ENCODE measurements at regions of chr6 and their contacts with region 1.

Region 1: DNA sequence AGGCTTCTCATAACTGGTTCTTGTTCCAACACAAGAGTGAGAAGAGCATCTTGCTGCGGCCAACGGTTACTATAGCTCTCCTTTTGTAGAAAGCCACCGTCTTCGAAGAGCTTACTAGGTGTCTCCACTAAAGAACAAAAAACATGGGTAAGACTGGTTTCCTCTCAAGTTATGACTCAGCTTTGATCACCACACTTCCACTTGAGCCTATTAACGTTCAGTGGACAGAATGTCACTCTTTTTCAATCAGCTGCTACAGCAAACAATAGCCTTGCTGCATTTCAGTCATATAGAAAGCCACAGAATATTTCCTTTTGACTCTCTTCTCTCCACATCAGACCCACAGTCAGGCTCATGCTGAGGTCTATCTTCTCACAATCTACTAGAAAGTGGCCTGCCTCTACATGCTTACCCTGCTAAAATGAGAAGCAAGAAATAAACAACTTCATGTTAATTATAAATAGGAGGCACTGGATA is 243.5 kb upstream of the PREP start:
- DNase-seq: peak; percentile 88
- H3K4me3 Mint-ChIP-seq: peak overlapping the region; percentile 39
- H3K27ac Mint-ChIP-seq: peak overlapping the region; percentile 90
- H3K4me1 Mint-ChIP-seq: peaks cover 70% of the 10 kb centered on the region
- H3K27me3 Mint-ChIP-seq: no peaks in the 10 kb centered on the region

Region 2: GRCh38 chr6:105474234-105474633 is 172.2 kb before region 1 on chr6:
- intact Hi-C with region 1: no loop called
- DNase-seq: no peak
- H3K4me3 Mint-ChIP-seq: no peak overlapping the region
- H3K27ac Mint-ChIP-seq: no peak overlapping the region
- H3K4me1 Mint-ChIP-seq: no peaks in the 10 kb centered on the region
- H3K27me3 Mint-ChIP-seq: peaks cover 56% of the 10 kb centered on the region

Region 3: DNA sequence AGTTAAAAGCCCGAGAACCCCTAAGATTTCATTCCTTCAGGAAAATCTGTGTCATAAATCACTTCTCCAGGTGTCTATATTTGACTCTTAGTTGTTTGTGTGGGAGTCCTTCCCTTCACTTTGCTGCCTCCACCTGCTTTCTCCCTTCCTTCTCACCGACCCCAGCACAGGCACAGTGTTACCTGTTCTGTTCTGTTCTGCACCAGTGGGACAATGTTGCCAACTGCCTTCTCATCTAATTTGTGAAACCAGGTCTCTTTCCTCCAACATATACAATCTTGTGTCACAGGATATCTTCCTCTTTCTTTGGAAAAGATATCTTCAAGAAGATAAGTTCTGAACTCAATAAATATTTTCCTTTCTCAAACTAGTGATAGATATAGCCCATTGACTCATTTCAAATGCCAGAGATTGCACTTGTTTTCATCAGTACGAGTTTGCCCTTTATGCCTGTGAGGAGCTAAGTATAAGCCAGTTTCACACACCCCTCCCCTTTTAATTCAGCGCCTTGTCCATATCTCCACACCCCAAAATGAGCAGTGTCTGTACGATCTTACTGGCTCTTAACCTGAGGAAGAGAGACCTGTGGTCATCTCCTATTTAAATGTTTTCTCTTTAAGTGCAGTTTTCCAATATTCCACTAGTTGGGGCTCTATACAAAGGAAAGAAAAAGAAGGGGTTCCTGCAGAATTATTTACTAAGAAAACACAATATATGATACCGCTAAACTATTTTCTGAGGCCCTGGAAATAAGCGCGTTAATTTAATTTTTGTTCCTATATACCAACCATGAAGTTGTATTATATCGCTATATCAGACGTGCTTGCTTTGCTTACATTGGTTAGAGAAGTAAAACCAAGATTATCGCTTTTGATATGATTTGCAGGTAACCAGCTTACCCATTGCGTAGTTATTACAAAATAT is 161.9 kb before region 1 on chr6:
- intact Hi-C with region 1: loop called (anchors 1 kb)
- DNase-seq: peak; percentile 63
- H3K4me3 Mint-ChIP-seq: no peak overlapping the region
- H3K27ac Mint-ChIP-seq: peak overlapping the region; percentile 26
- H3K4me1 Mint-ChIP-seq: peaks cover 41% of the 10 kb centered on the region
- H3K27me3 Mint-ChIP-seq: peaks cover 6% of the 10 kb centered on the region

Region 4: GRCh38 chr6:105601541-105602236 is 44.7 kb before region 1 on chr6:
- intact Hi-C with region 1: loop called (anchors 1 kb)
- DNase-seq: peak; percentile 78
- H3K4me3 Mint-ChIP-seq: peak overlapping the region; percentile 39
- H3K27ac Mint-ChIP-seq: peak overlapping the region; percentile 68
- H3K4me1 Mint-ChIP-seq: peaks cover 12% of the 10 kb centered on the region
- H3K27me3 Mint-ChIP-seq: no peaks in the 10 kb centered on the region

Region 5: GRCh38 chr6:105633814-105634213 is 12.6 kb before region 1 on chr6:
- intact Hi-C with region 1: loop called (anchors 1 kb)
- DNase-seq: no peak
- H3K4me3 Mint-ChIP-seq: no peak overlapping the region
- H3K27ac Mint-ChIP-seq: peak overlapping the region; percentile 31
- H3K4me1 Mint-ChIP-seq: peaks cover 7% of the 10 kb centered on the region
- H3K27me3 Mint-ChIP-seq: peaks cover 10% of the 10 kb centered on the region

Region 6: GRCh38 chr6:105900125-105900937 is 253.9 kb after region 1 on chr6:
- intact Hi-C with region 1: loop called (anchors 1 kb)
- DNase-seq: peak; percentile 83
- H3K4me3 Mint-ChIP-seq: peak overlapping the region; percentile 75
- H3K27ac Mint-ChIP-seq: peak overlapping the region; percentile 95
- H3K4me1 Mint-ChIP-seq: peaks cover 26% of the 10 kb centered on the region
- H3K27me3 Mint-ChIP-seq: no peaks in the 10 kb centered on the region

Region 7: DNA sequence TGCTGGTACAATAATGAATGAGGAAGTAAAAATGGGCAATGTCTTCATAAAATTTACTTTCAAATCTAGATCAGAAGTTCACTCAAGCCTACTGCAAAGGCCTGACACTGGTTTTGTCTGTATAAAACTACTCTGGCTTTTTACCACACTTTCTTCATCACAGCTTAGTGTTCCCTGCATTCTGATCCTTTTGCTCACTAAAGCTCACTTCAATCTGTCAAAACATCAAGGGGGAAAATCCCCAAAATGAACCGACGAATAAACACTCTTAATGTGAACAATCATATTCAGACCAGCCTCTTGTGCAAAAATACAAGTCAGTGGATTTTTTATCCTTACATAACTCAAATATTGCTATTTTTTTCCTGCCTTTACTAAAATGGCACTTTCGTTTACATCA is 538.2 kb after region 1 on chr6:
- intact Hi-C with region 1: loop called (anchors 1 kb)
- DNase-seq: peak; percentile 49
- H3K4me3 Mint-ChIP-seq: no peak overlapping the region
- H3K27ac Mint-ChIP-seq: no peak overlapping the region
- H3K4me1 Mint-ChIP-seq: peaks cover 47% of the 10 kb centered on the region
- H3K27me3 Mint-ChIP-seq: no peaks in the 10 kb centered on the region